Caco-2 (cell line): ENCODE measurements at regions of chr2 and their contacts with region 1.

Region 1: DNA sequence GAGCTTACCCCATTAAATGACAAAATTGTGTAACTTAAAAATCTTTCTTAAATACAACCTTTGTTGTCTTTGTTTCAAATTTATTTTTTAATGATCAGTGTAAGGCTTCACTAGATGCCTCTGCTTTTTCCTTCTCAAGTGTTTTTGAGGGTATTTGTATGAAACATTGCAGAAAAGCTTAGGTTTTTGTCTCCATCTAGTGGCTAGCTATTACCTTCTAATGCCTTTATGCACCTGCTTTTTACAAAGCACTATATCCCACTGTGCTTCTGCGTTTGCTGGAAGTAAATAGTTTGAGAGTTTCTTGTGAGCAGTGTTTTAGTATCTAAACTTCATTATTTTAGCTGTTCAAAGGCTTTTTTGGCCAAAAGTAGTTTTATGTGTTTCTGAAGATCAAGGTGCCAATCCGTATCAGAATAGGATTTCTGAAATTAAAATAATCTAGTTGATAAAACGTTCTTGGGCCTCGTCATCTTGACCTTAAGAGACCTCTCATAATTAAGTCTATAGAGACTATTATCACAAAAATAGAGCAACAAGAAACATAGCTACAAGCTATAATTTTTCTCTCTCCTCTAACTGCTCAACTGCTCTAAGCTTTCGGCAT is 47.0 kb downstream of the IWS1 start:
- DNase-seq: peak in 1 of 2 experiments; percentile 48
- H3K4me3 ChIP-seq: no peak overlapping the region
- H3K4me3 Mint-ChIP-seq: no peak overlapping the region
- H3K27ac Mint-ChIP-seq: no peak overlapping the region
- H3K4me1 ChIP-seq: no peaks in the 10 kb centered on the region
- H3K4me1 Mint-ChIP-seq: no peaks in the 10 kb centered on the region
- H3K27me3 ChIP-seq: no peaks in the 10 kb centered on the region
- H3K27me3 Mint-ChIP-seq: no peaks in the 10 kb centered on the region
- CTCF ChIP-seq: peak; percentile 71 to 73

Region 2: GRCh38 chr2:127261804-127262406 is 217.4 kb before region 1 on chr2:
- CTCF ChIA-PET with region 1: no interaction called
- POLR2A ChIA-PET with region 1: no interaction called
- intact Hi-C with region 1: no loop called
- DNase-seq: no peak
- H3K4me3 ChIP-seq: no peak overlapping the region
- H3K4me3 Mint-ChIP-seq: no peak overlapping the region
- H3K27ac Mint-ChIP-seq: no peak overlapping the region
- H3K4me1 ChIP-seq: no peaks in the 10 kb centered on the region
- H3K4me1 Mint-ChIP-seq: no peaks in the 10 kb centered on the region
- H3K27me3 ChIP-seq: no peaks in the 10 kb centered on the region
- H3K27me3 Mint-ChIP-seq: no peaks in the 10 kb centered on the region
- CTCF ChIP-seq: no peak

Region 3: DNA sequence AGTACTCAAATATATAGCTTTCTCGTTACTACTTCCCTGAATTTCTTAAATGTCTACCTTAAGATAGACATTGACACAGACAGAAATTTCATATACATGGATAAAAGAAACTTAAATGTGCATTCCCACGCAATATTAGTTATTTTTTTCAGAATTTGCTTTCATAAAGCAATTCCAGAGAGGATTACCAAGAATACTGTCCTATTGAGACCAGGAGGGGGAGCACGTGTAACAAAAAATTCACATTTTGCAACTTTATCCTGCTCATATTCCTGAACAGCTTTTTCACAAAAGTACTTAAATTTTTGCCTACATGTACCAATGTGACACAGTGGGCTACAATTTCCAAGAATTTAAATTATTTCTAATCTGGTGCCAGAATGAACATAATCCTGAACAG is 154.7 kb before region 1 on chr2:
- CTCF ChIA-PET with region 1: interaction called, 15 read pairs
- POLR2A ChIA-PET with region 1: no interaction called
- intact Hi-C with region 1: loop called (anchors 1 kb)
- DNase-seq: peak in 1 of 2 experiments; percentile 48
- H3K4me3 ChIP-seq: no peak overlapping the region
- H3K4me3 Mint-ChIP-seq: no peak overlapping the region
- H3K27ac Mint-ChIP-seq: no peak overlapping the region
- H3K4me1 ChIP-seq: no peaks in the 10 kb centered on the region
- H3K4me1 Mint-ChIP-seq: no peaks in the 10 kb centered on the region
- H3K27me3 ChIP-seq: no peaks in the 10 kb centered on the region
- H3K27me3 Mint-ChIP-seq: no peaks in the 10 kb centered on the region
- CTCF ChIP-seq: peak; percentile 67 to 79

Region 4: DNA sequence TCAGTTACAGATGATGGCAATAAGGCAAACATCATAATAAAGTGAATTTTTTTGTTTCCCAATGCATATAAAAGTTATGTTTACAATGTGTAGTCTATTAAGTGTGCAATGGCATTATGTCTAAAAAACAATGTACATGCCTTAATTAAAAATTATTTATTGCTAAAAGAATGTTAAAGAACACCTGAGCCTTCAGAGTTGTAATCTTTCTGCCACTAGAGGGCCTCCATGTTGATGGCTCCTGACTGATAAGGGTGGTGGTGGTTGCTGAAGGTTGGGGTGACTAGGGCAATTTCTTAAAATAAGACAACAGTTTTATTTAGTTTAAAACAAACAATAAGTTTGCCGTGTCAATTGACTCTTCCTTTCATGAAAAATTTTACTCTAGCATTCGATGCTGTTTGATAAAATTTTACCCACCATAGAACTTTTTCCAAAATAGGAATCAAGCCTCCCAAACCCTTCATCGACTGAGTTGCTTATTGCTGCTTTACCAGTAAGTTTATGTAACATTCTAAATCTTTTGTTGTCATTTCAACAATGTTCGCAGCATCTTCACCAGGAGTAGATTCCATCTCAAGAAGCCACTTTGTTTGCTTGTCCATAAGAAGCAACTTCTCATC is 123.8 kb before region 1 on chr2:
- CTCF ChIA-PET with region 1: no interaction called
- POLR2A ChIA-PET with region 1: no interaction called
- intact Hi-C with region 1: loop called (anchors 1 kb)
- DNase-seq: peak in 1 of 2 experiments; percentile 37
- H3K4me3 ChIP-seq: no peak overlapping the region
- H3K4me3 Mint-ChIP-seq: no peak overlapping the region
- H3K27ac Mint-ChIP-seq: no peak overlapping the region
- H3K4me1 ChIP-seq: peaks cover 5% of the 10 kb centered on the region; the same call in 1 of the 2 replicates
- H3K4me1 Mint-ChIP-seq: peaks cover 16% of the 10 kb centered on the region
- H3K27me3 ChIP-seq: no peaks in the 10 kb centered on the region
- H3K27me3 Mint-ChIP-seq: no peaks in the 10 kb centered on the region
- CTCF ChIP-seq: peak; percentile 68

Region 5: GRCh38 chr2:127415593-127416505 is 63.5 kb before region 1 on chr2:
- CTCF ChIA-PET with region 1: interaction called, 4 read pairs
- POLR2A ChIA-PET with region 1: no interaction called
- intact Hi-C with region 1: loop called (anchors 2 kb)
- DNase-seq: peak; percentile 86 to 92
- H3K4me3 ChIP-seq: peak overlapping the region; percentile 47
- H3K4me3 Mint-ChIP-seq: peak overlapping the region; percentile 76
- H3K27ac Mint-ChIP-seq: peak overlapping the region; percentile 46
- H3K4me1 ChIP-seq: peaks cover 36% of the 10 kb centered on the region
- H3K4me1 Mint-ChIP-seq: peaks cover 35% of the 10 kb centered on the region
- H3K27me3 ChIP-seq: no peaks in the 10 kb centered on the region
- H3K27me3 Mint-ChIP-seq: no peaks in the 10 kb centered on the region
- CTCF ChIP-seq: peak; percentile 89 to 92

Region 6: GRCh38 chr2:127437781-127438726 is 41.3 kb before region 1 on chr2:
- CTCF ChIA-PET with region 1: no interaction called
- POLR2A ChIA-PET with region 1: no interaction called
- intact Hi-C with region 1: loop called (anchors 1 kb)
- DNase-seq: peak; percentile 83 to 93
- H3K4me3 ChIP-seq: no peak overlapping the region
- H3K4me3 Mint-ChIP-seq: peak overlapping the region; percentile 34
- H3K27ac Mint-ChIP-seq: peak overlapping the region; percentile 84
- H3K4me1 ChIP-seq: peaks cover 19% of the 10 kb centered on the region
- H3K4me1 Mint-ChIP-seq: peaks cover 6% of the 10 kb centered on the region
- H3K27me3 ChIP-seq: no peaks in the 10 kb centered on the region
- H3K27me3 Mint-ChIP-seq: no peaks in the 10 kb centered on the region
- CTCF ChIP-seq: peak in 1 of 2 experiments; percentile 21

Region 7: DNA sequence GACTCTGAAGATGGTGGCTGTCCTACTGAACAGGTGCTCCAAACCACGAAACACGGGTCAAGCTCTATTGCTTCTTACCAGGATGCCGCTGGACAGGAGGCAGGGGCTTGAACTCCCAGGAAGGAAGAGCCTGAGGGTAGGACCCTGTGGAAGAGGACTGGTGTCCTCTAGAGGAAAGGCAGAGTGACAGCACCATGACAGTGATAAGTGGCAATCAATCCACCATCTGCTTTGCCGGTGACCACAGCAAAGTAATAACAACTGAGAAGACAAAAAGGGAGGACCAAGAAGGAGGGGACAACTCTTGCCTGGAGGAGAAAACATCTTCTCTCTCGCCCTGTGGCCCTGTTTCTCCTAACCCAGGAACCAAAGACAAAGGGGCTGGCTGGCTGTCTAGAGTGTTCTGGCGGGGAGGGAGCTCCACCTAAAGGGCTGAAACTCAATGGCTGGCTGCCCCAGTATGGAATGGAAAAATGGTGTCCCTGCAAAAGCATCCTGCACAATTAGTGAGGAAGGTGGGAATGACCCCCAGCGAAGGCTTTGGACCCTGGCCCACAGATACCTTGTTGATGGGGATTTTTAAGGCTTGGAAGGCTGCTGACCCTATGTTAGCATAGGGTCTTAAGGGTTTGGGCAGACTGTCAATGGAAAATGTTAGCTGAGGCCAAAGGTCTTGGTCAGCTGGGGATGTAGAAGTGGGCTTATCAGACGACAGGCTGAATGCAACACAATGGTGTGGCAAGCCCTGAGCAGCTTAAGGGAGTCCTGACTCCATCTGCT is 25.7 kb before region 1 on chr2:
- CTCF ChIA-PET with region 1: interaction called, 4 read pairs
- POLR2A ChIA-PET with region 1: interaction called, 3 read pairs
- intact Hi-C with region 1: loop called (anchors 2 kb)
- DNase-seq: peak; percentile 36 to 48
- H3K4me3 ChIP-seq: no peak overlapping the region
- H3K4me3 Mint-ChIP-seq: peak overlapping the region; percentile 6
- H3K27ac Mint-ChIP-seq: peak overlapping the region; percentile 18
- H3K4me1 ChIP-seq: peaks cover 40% of the 10 kb centered on the region
- H3K4me1 Mint-ChIP-seq: peaks cover 36% of the 10 kb centered on the region
- H3K27me3 ChIP-seq: no peaks in the 10 kb centered on the region
- H3K27me3 Mint-ChIP-seq: no peaks in the 10 kb centered on the region
- CTCF ChIP-seq: peak in 1 of 2 experiments; percentile 25

Region 8: DNA sequence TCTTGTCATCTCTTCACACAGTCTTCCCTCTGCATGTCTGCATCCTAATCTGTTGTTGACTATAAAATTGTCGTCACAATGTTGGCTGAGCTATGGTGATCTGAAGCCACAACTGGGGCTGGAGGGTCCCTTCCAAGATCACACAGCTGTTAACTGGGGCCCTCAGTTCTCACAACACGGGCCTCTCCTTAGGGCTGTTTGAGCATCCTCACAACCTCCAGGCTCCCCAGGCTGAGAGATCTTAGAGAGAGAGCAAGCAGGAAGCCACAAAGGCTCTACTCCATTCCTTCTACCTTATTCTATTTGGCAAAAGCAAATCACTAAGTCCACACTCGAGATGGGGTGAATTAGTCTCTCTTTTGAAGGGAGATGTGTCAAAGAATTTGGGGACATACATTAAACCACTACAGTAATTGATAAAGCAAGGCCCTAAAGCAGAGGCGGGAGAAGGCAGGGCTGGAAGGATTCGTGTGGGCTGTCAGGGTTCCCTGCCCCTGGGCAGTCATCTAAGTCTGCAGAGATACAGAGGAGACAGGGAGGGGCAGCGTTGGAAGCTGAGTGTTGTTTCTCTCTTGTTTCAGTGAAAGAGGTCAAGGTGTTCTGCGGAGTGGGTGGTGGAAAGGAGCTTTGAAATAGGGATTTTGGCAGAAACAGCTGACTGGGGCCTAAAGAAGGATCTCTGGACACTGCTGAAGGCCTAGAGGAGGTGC is 72.1 kb after region 1 on chr2:
- CTCF ChIA-PET with region 1: no interaction called
- POLR2A ChIA-PET with region 1: no interaction called
- intact Hi-C with region 1: no loop called
- DNase-seq: no peak
- H3K4me3 ChIP-seq: no peak overlapping the region
- H3K4me3 Mint-ChIP-seq: no peak overlapping the region
- H3K27ac Mint-ChIP-seq: no peak overlapping the region
- H3K4me1 ChIP-seq: no peaks in the 10 kb centered on the region
- H3K4me1 Mint-ChIP-seq: no peaks in the 10 kb centered on the region
- H3K27me3 ChIP-seq: no peaks in the 10 kb centered on the region
- H3K27me3 Mint-ChIP-seq: peaks cover 7% of the 10 kb centered on the region
- CTCF ChIP-seq: no peak